ENCODE measurements at regions of chr5 and their contacts with region 1.

Region 1: DNA sequence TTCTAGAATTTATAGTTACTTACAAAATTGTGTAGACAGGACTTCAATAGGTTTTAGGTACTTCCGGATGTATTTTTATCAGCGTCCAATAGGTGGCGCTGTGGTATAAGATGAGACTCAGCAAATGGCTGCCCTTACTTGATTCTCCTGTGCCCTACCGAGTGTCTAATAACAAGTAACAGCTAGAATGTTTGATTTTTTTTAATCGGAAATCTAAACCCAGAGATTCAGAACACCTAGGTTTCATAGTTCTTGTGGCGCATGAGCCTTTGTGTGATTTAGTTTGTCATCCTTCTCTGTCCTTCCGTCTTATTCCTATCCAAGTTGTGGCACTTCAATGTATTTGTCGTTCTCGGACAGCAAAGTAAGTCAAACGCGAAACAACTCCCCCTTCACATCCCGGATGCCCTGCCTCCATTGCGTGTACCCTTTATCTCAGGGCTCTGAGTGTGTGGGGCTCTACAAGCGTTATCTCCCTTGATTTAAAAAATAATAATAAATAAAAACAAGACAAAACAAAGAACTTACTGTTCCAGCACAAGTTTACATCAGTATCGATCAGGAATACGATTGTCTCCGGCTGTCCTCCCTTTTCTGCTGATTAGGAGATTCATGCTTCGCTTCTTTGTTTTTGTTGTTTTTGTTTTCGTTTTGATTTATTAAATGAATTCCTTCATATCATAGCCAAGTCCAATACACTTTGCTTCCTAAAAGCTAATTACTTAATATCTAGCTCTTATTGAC is 50.7 kb upstream of the SLC30A5 start:
- DNase-seq: peak; percentile 88
- ATAC-seq: peak; percentile 93
- H3K4me3 ChIP-seq: peak overlapping the region; percentile 47 to 60
- H3K27ac ChIP-seq: peak overlapping the region; percentile 37; the same call in 1 of the 2 replicates
- H3K4me1 ChIP-seq: peaks cover 4 to 12% of the 10 kb centered on the region in 2 experiments; a peak in 3 of 4 replicates
- H3K27me3 ChIP-seq: no peaks in the 10 kb centered on the region
- CTCF ChIP-seq: peak; percentile 70 to 91 (median 72); a peak in 5 of 6 replicates
- POLR2A ChIP-seq: no peak
- RAD21 ChIP-seq: peak; percentile 87

Region 2: GRCh38 chr5:68762201-68762600 is 280.9 kb before region 1 on chr5:
- CTCF ChIA-PET with region 1: no interaction called
- POLR2A ChIA-PET with region 1: no interaction called
- RAD21 ChIA-PET with region 1: no interaction called
- intact Hi-C with region 1: no loop called
- DNase-seq: no peak
- ATAC-seq: no peak
- H3K4me3 ChIP-seq: no peak overlapping the region
- H3K27ac ChIP-seq: no peak overlapping the region
- H3K4me1 ChIP-seq: no peaks in the 10 kb centered on the region
- H3K27me3 ChIP-seq: 0 out of 2 replicates have a peak, but pooled peaks cover 9% of the 10 kb centered on the region
- CTCF ChIP-seq: no peak
- POLR2A ChIP-seq: no peak
- RAD21 ChIP-seq: no peak

Region 3: GRCh38 chr5:68911840-68912690 is 131.0 kb before region 1 on chr5:
- CTCF ChIA-PET with region 1: no interaction called
- POLR2A ChIA-PET with region 1: no interaction called
- RAD21 ChIA-PET with region 1: no interaction called
- intact Hi-C with region 1: no loop called
- DNase-seq: no peak
- ATAC-seq: no peak
- H3K4me3 ChIP-seq: no peak overlapping the region
- H3K27ac ChIP-seq: no peak overlapping the region
- H3K4me1 ChIP-seq: peaks cover 3 to 4% of the 10 kb centered on the region in 2 experiments; a peak in 2 of 4 replicates
- H3K27me3 ChIP-seq: no peaks in the 10 kb centered on the region
- CTCF ChIP-seq: no peak
- POLR2A ChIP-seq: no peak
- RAD21 ChIP-seq: no peak

Region 4: GRCh38 chr5:68962757-68963484 is 80.2 kb before region 1 on chr5:
- CTCF ChIA-PET with region 1: no interaction called
- POLR2A ChIA-PET with region 1: no interaction called
- RAD21 ChIA-PET with region 1: no interaction called
- intact Hi-C with region 1: no loop called
- DNase-seq: peak; percentile 53
- ATAC-seq: peak; percentile 96
- H3K4me3 ChIP-seq: no peak overlapping the region
- H3K27ac ChIP-seq: no peak overlapping the region
- H3K4me1 ChIP-seq: peaks cover 0 to 8% of the 10 kb centered on the region in 2 experiments; a peak in 2 of 4 replicates
- H3K27me3 ChIP-seq: no peaks in the 10 kb centered on the region
- CTCF ChIP-seq: peak; percentile 75 to 90 (median 89); a peak in 5 of 6 replicates
- POLR2A ChIP-seq: no peak
- RAD21 ChIP-seq: peak; percentile 85

Region 5: GRCh38 chr5:69083412-69083811 is 40.3 kb after region 1 on chr5:
- CTCF ChIA-PET with region 1: interaction called, 10 read pairs
- POLR2A ChIA-PET with region 1: no interaction called
- RAD21 ChIA-PET with region 1: no interaction called
- intact Hi-C with region 1: loop called (anchors 2 kb)
- DNase-seq: peak; percentile 47
- ATAC-seq: peak; percentile 99
- H3K4me3 ChIP-seq: no peak overlapping the region
- H3K27ac ChIP-seq: no peak overlapping the region
- H3K4me1 ChIP-seq: peaks cover 9 to 15% of the 10 kb centered on the region in 2 experiments
- H3K27me3 ChIP-seq: no peaks in the 10 kb centered on the region
- CTCF ChIP-seq: peak; percentile 44 to 49 (median 48); a peak in 5 of 6 replicates
- POLR2A ChIP-seq: peak; percentile 80
- RAD21 ChIP-seq: peak; percentile 59

Region 6: DNA sequence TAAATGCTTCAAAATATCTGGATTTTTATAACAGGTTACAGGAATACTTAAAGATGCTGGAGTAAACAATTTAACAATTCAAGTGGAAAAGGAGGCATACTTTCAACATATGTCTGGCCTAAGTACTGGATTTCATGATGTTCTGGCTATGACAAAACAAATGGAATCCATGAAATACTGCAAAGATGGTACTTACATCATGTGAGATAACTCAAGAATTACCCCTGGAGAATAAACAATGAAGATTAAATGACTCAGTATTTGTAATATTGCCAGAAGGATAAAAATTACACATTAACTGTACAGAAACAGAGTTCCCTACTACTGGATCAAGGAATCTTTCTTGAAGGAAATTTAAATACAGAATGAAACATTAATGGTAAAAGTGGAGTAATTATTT is 86.3 kb after region 1 on chr5:
- CTCF ChIA-PET with region 1: no interaction called
- POLR2A ChIA-PET with region 1: no interaction called
- RAD21 ChIA-PET with region 1: no interaction called
- intact Hi-C with region 1: no loop called
- DNase-seq: no peak
- ATAC-seq: no peak
- H3K4me3 ChIP-seq: no peak overlapping the region
- H3K27ac ChIP-seq: no peak overlapping the region
- H3K4me1 ChIP-seq: no peaks in the 10 kb centered on the region
- H3K27me3 ChIP-seq: no peaks in the 10 kb centered on the region
- CTCF ChIP-seq: no peak
- POLR2A ChIP-seq: no peak
- RAD21 ChIP-seq: no peak

Region 7: DNA sequence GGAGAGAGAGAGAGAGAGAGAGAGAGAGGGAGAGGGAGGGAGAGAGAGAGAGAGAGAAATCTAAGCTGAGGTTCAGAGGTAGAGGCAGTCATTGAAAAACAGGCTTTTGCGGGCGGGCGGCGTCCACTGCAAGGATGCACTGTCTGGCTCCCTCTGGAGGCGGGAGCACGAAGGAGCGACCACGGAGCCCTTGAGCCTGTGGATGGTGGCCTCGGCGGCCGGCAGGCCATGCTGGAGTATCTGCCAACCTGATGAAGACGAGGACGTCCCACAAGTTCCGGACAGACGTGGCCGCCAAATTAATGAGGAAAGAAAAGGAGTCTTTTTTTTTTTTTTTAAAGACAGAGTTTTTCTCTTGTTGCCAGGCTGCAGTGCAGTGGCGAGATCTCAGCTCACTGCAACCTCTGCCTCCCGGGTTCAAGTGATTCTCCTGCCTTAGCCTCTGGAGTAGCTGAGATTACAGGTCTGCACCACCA is 291.7 kb after region 1 on chr5:
- CTCF ChIA-PET with region 1: interaction called, 4 read pairs
- POLR2A ChIA-PET with region 1: no interaction called
- RAD21 ChIA-PET with region 1: no interaction called
- intact Hi-C with region 1: loop called (anchors 10 kb)
- DNase-seq: peak; percentile 57
- ATAC-seq: peak; percentile 85
- H3K4me3 ChIP-seq: no peak overlapping the region
- H3K27ac ChIP-seq: no peak overlapping the region
- H3K4me1 ChIP-seq: peaks cover 9 to 45% of the 10 kb centered on the region in 2 experiments; a peak in 3 of 4 replicates
- H3K27me3 ChIP-seq: no peaks in the 10 kb centered on the region
- CTCF ChIP-seq: peak; percentile 51 to 76 (median 73); a peak in 5 of 6 replicates
- POLR2A ChIP-seq: no peak
- RAD21 ChIP-seq: peak; percentile 80

Region 8: DNA sequence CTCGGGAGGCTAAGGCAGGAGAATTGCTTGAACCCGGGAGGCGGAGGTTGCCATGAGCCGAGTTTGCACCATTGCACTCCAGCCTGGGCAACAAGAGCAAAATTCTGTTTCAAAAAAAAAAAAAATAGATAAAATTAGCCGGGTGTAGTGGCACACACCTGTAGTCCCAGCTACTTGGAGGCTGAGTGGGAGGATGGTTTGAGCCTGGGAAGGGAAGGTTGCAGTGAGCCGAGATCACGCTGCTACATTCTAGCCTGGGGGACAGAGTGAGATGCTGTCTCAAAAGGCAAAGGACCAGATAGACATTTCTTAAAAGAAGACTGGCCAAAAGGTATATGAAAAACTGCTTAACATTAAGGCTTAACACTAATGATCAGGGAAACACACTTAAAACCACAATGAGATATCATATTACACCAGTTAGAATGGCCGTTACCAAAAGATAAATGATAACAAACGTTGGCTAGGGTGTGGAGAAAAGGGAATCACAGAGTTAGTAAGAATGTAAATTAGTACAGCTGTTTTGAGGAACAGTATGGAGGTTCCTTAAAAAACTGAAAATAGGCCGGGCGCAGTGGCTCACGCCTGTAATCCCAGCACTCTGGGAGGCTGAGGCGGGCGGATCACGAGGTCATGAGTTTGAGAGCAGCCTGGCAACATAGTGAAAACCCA is 361.7 kb after region 1 on chr5:
- CTCF ChIA-PET with region 1: no interaction called
- POLR2A ChIA-PET with region 1: no interaction called
- RAD21 ChIA-PET with region 1: no interaction called
- intact Hi-C with region 1: loop called (anchors 10 kb)
- DNase-seq: no peak
- ATAC-seq: no peak
- H3K4me3 ChIP-seq: no peak overlapping the region
- H3K27ac ChIP-seq: no peak overlapping the region
- H3K4me1 ChIP-seq: no peaks in the 10 kb centered on the region
- H3K27me3 ChIP-seq: no peaks in the 10 kb centered on the region
- CTCF ChIP-seq: no peak
- POLR2A ChIP-seq: no peak
- RAD21 ChIP-seq: no peak